ENCODE measurements at regions of chr12 and their contacts with region 1.

Region 1: DNA sequence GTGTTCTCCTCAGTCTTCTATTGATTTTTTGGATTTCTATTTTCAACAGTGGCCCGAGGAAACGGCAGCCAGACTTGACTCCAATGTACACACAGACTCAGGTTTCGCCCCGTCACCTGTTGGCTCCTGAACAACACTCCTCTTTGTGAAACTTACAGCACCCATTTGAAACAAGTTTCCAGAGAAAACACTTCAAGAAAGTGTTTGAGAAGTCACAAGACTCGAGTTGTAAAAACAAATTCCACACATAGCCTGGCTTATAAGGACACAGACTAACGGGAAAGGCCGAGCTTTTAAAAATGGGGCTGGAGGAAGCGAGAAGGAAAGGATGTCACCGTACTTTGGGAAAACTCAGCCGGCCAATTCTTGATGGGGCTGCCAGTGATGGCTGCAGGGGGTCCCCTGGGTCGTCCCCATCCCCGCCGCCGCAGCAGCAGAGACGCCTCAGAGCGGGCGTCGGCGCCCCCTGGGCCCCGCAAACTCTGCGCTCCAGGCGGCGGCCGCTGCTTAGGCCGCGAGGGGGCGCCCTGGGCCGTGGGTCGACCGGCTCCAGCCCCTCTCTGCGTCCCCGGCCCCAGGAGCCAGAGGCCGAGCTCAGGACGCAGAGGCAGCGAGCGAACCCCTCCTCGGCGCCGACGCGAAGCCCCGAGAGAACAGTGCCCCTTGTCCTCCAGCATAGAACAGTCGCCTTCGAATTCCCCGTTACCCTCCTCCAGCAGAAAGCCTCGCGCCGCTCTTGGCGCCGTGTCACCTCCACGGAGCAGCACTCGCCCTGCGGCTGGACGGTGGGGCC is 106.9 kb downstream of the PRICKLE1 start:
- DNase-seq: peak; percentile 71 to 75 (median 74)
- ATAC-seq: peak; percentile 86
- H3K4me3 ChIP-seq: peak overlapping the region; percentile 26
- H3K4me1 ChIP-seq: peaks cover 7% of the 10 kb centered on the region
- CTCF ChIP-seq: peak; percentile 65

Region 2: DNA sequence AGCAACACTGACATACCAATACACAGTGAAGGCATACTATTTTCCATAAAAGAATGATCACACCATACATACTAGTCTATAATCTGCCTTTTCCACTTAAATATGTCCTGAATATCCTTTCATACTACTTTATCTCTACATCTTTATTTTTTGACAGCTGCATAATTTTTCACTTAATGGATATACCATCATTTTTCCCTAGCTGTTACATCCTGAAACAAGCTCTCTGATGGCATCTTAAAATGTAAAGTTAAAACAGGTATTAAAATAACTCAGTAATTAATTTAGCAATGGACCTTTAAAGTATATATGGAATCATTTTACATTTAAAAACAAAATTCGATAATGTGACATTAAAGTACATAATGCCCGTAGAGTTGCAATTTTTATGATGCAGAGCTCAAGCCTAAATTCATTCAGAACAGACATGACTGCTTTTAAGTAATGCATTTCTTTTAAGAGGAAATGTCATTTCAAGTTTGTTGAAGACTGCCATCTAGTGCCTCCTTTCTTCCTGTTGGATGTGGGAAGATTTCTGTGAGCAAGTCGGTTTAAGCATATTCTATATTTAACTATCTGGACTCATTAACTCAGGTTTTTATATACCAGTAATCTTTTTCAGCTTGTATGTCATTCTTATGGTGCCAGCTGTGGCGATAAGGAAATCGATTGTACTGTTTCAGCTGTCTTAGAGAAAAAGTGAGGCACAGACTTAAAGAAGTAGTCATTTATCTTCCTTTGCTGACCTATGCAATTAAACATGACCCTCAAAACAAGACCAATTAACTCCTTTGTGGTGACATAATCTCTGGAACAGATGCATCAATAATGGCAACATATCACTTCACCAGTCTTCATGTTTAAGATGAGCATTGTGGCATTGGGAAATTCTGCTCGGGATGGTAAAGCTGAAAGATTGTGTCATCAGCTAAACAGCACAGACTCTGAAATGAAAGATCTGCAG is 86.6 kb after region 1 on chr12:
- intact Hi-C with region 1: loop called in 1 of 2 experiments (anchors 10 kb)
- DNase-seq: peak in 1 of 3 donors; percentile 52
- ATAC-seq: peak; percentile 25
- H3K4me3 ChIP-seq: no peak overlapping the region
- H3K4me1 ChIP-seq: no peaks in the 10 kb centered on the region
- CTCF ChIP-seq: no peak

Region 3: GRCh38 chr12:42935756-42936155 is 453.1 kb after region 1 on chr12:
- intact Hi-C with region 1: no loop called
- DNase-seq: no peak
- ATAC-seq: no peak
- H3K4me3 ChIP-seq: no peak overlapping the region
- H3K4me1 ChIP-seq: no peaks in the 10 kb centered on the region
- CTCF ChIP-seq: no peak